ENCODE measurements at regions of chr19 and their contacts with region 1.

Region 1: GRCh38 chr19:2820112-2820702 is 539 bp downstream of the ZNF554 start:
- DNase-seq: peak in 1 of 10 donors; percentile 5
- ATAC-seq: peak; percentile 22 to 26
- H3K4me3 Mint-ChIP-seq: peak overlapping the region; percentile 81 to 93 (median 87)
- H3K27ac Mint-ChIP-seq: peak overlapping the region in 8 of 10 donors; percentile 39 to 87 (median 76)
- H3K4me1 Mint-ChIP-seq: peaks cover 0 to 14% (median 6%) of the 10 kb centered on the region in 4 donors
- H3K27me3 Mint-ChIP-seq: no peaks in the 10 kb centered on the region

Region 2: GRCh38 chr19:2840794-2841790 is 20.9 kb after region 1 on chr19 and contains the start of gene ZNF555:
- POLR2A ChIA-PET with region 1: interaction called, 11 read pairs
- DNase-seq: peak; percentile 93 to 100 (median 98)
- ATAC-seq: peak; percentile 96 to 97
- H3K4me3 Mint-ChIP-seq: peak within 1 kb of the TSS; percentile 88 to 96 (median 94)
- H3K27ac Mint-ChIP-seq: peak within 1 kb of the TSS; percentile 79 to 95 (median 93)
- H3K4me1 Mint-ChIP-seq: peaks cover 12 to 36% (median 21%) of the 10 kb centered on the region in 4 donors
- H3K27me3 Mint-ChIP-seq: no peaks in the 10 kb centered on the region
- polyA plus RNA-seq, gene ZNF555: 1.0 to 3.4 (median 2.2) TPM